Caco-2 (cell line): ENCODE measurements at regions of chr4 and their contacts with region 1.

Region 1: DNA sequence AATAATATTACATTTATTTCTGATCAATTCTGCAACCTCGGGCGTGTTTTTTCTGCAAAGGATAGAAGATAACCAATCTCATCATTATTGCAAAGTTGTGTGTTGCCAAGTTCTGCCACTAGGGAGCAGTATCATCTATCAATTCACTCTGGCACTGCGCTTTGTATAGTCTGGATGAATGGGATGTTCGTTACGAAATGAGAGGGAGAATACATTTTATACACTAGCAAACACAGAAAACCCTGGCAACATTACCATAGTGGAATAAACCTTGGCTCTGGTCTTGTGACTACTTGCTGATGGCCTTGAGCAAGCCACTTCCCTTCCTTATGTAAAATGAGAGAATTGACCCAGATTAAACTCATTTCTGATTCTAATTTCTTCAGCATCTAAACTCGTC is 97.5 kb upstream of the ZNF518B start:
- DNase-seq: peak; percentile 43 to 70
- H3K4me3 ChIP-seq: no peak overlapping the region
- H3K4me3 Mint-ChIP-seq: no peak overlapping the region
- H3K27ac Mint-ChIP-seq: no peak overlapping the region
- H3K4me1 ChIP-seq: no peaks in the 10 kb centered on the region
- H3K4me1 Mint-ChIP-seq: no peaks in the 10 kb centered on the region
- H3K27me3 ChIP-seq: no peaks in the 10 kb centered on the region
- H3K27me3 Mint-ChIP-seq: peaks cover 3% of the 10 kb centered on the region
- CTCF ChIP-seq: peak; percentile 70 to 75

Region 2: DNA sequence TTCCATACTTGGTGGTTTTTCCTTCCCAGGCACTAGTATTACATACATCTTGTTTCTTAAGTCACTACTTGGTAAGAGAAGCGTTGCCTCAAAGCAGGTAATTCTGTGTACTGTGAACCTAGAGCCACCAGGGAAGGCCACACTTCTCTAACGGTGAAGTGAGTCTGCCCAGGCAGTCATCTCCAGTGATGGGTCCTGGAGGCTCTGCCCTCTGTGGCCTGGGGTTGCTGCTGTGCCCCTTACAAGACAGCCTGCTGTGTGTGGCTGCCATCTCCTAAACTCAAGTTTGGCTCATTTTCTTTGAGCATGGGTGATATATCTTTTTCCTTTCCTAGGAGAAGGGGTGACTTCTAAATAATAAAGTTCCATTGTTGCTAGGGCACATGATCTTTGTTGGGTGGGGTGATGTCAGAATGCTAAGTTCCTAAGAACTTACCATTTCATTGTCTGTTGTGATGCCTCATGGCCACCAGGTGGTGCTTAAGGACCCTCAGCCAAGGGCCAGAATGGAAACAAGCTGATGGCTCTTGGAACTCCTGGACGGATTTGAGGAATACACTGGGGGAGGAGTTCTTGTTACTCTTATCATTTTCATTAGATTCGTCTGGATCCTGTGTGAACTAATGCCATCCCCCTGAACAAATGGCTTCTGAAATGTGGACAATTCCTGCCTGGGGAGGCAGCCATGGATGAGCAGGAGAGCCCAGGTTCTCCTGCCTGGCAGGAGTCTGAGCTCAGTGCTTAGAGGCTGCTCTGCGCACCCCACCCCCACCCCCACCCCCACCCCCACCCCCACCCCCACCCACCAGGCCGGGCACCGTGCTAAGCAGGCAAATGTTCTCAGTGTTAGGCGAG is 397.0 kb before region 1 on chr4:
- CTCF ChIA-PET with region 1: interaction called, 5 read pairs
- POLR2A ChIA-PET with region 1: no interaction called
- intact Hi-C with region 1: loop called (anchors 1 kb)
- DNase-seq: peak; percentile 58 to 62
- H3K4me3 ChIP-seq: no peak overlapping the region
- H3K4me3 Mint-ChIP-seq: no peak overlapping the region
- H3K27ac Mint-ChIP-seq: no peak overlapping the region
- H3K4me1 ChIP-seq: peaks cover 7% of the 10 kb centered on the region
- H3K4me1 Mint-ChIP-seq: peaks cover 10% of the 10 kb centered on the region
- H3K27me3 ChIP-seq: no peaks in the 10 kb centered on the region
- H3K27me3 Mint-ChIP-seq: peaks cover 6% of the 10 kb centered on the region
- CTCF ChIP-seq: peak; percentile 77 to 79

Region 3: DNA sequence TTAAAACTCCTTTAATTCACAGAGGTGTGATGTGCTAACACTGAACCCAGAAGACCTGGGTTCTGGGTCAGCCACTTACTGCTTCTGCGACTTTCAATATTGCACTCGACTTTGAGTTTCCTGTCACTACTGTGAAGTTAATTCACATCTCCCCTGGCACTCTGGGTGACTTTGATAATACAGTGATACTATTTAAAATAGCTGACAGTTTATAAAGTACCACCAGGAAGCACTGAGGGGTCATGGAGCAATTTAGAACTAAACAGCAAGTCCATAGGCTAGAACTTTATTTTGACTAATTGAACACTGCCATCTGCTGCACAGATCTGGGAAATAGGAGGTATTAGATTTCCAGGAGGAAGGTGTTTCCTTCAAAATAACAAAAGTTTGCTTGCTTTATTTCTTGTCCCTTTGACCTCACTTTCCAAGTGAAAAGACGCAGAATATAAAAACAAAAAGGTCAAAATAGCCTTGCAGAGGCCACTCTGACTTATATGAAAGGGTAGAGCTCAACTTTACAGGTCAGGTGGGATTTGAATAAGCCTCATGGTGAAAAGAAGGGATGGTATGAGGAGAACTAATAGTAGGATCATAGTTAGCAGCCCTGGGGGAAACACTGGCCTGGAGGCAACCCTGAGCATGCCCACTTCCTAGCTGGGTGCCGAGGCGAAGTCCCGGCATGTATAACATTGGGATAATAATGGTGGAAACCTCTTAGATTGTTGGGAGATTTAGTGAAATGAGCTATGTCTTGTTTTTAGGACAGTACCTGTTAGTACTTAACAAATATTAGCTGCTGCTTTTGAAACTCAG is 150.9 kb before region 1 on chr4:
- CTCF ChIA-PET with region 1: no interaction called
- POLR2A ChIA-PET with region 1: no interaction called
- intact Hi-C with region 1: loop called (anchors 1 kb)
- DNase-seq: peak in 1 of 2 experiments; percentile 52
- H3K4me3 ChIP-seq: no peak overlapping the region
- H3K4me3 Mint-ChIP-seq: no peak overlapping the region
- H3K27ac Mint-ChIP-seq: no peak overlapping the region
- H3K4me1 ChIP-seq: no peaks in the 10 kb centered on the region; the same call in 1 of the 2 replicates
- H3K4me1 Mint-ChIP-seq: no peaks in the 10 kb centered on the region
- H3K27me3 ChIP-seq: no peaks in the 10 kb centered on the region
- H3K27me3 Mint-ChIP-seq: no peaks in the 10 kb centered on the region
- CTCF ChIP-seq: peak; percentile 48 to 50

Region 4: GRCh38 chr4:11424000-11424399 is 869.3 kb after region 1 on chr4:
- CTCF ChIA-PET with region 1: interaction called, 11 read pairs
- POLR2A ChIA-PET with region 1: no interaction called
- intact Hi-C with region 1: loop called (anchors 10 kb)
- DNase-seq: peak in 1 of 2 experiments; percentile 29
- H3K4me3 ChIP-seq: no peak overlapping the region
- H3K4me3 Mint-ChIP-seq: no peak overlapping the region
- H3K27ac Mint-ChIP-seq: no peak overlapping the region
- H3K4me1 ChIP-seq: no peaks in the 10 kb centered on the region
- H3K4me1 Mint-ChIP-seq: peaks cover 19% of the 10 kb centered on the region
- H3K27me3 ChIP-seq: no peaks in the 10 kb centered on the region
- H3K27me3 Mint-ChIP-seq: no peaks in the 10 kb centered on the region
- CTCF ChIP-seq: peak; percentile 13 to 29

Region 5: GRCh38 chr4:11623726-11624037 is 1069.0 kb after region 1 on chr4:
- CTCF ChIA-PET with region 1: no interaction called
- POLR2A ChIA-PET with region 1: no interaction called
- intact Hi-C with region 1: loop called (anchors 1 kb)
- DNase-seq: peak; percentile 39 to 53
- H3K4me3 ChIP-seq: no peak overlapping the region
- H3K4me3 Mint-ChIP-seq: no peak overlapping the region
- H3K27ac Mint-ChIP-seq: no peak overlapping the region
- H3K4me1 ChIP-seq: peaks cover 25% of the 10 kb centered on the region
- H3K4me1 Mint-ChIP-seq: peaks cover 21% of the 10 kb centered on the region
- H3K27me3 ChIP-seq: no peaks in the 10 kb centered on the region
- H3K27me3 Mint-ChIP-seq: no peaks in the 10 kb centered on the region
- CTCF ChIP-seq: peak; percentile 46 to 53

Region 6: GRCh38 chr4:11881364-11881763 is 1326.7 kb after region 1 on chr4:
- CTCF ChIA-PET with region 1: no interaction called
- POLR2A ChIA-PET with region 1: no interaction called
- intact Hi-C with region 1: no loop called
- DNase-seq: no peak
- H3K4me3 ChIP-seq: no peak overlapping the region
- H3K4me3 Mint-ChIP-seq: no peak overlapping the region
- H3K27ac Mint-ChIP-seq: no peak overlapping the region
- H3K4me1 ChIP-seq: no peaks in the 10 kb centered on the region
- H3K4me1 Mint-ChIP-seq: no peaks in the 10 kb centered on the region
- H3K27me3 ChIP-seq: no peaks in the 10 kb centered on the region
- H3K27me3 Mint-ChIP-seq: no peaks in the 10 kb centered on the region
- CTCF ChIP-seq: no peak

Region 7: GRCh38 chr4:11954093-11954492 is 1399.4 kb after region 1 on chr4:
- CTCF ChIA-PET with region 1: no interaction called
- POLR2A ChIA-PET with region 1: no interaction called
- intact Hi-C with region 1: loop called (anchors 10 kb)
- DNase-seq: no peak
- H3K4me3 ChIP-seq: no peak overlapping the region
- H3K4me3 Mint-ChIP-seq: no peak overlapping the region
- H3K27ac Mint-ChIP-seq: no peak overlapping the region
- H3K4me1 ChIP-seq: no peaks in the 10 kb centered on the region
- H3K4me1 Mint-ChIP-seq: no peaks in the 10 kb centered on the region
- H3K27me3 ChIP-seq: no peaks in the 10 kb centered on the region
- H3K27me3 Mint-ChIP-seq: no peaks in the 10 kb centered on the region
- CTCF ChIP-seq: no peak